ENCODE measurements at regions of chr17 and their contacts with region 1.

Region 1: GRCh38 chr17:56754523-56755208 is 79.1 kb downstream of the C17orf67 start:
- DNase-seq: no peak
- H3K4me3 ChIP-seq: no peak overlapping the region
- CTCF ChIP-seq: no peak

Region 2: GRCh38 chr17:55852734-55853133 is 901.9 kb before region 1 on chr17:
- in situ Hi-C with region 1: loop called (anchors 25 kb)
- DNase-seq: no peak
- H3K4me3 ChIP-seq: no peak overlapping the region
- CTCF ChIP-seq: no peak

Region 3: GRCh38 chr17:56540836-56541235 is 213.8 kb before region 1 on chr17:
- in situ Hi-C with region 1: no loop called
- DNase-seq: no peak
- H3K4me3 ChIP-seq: no peak overlapping the region
- CTCF ChIP-seq: no peak

Region 4: GRCh38 chr17:56798908-56799307 is 44.2 kb after region 1 on chr17:
- in situ Hi-C with region 1: no loop called
- DNase-seq: no peak
- H3K4me3 ChIP-seq: no peak overlapping the region
- CTCF ChIP-seq: no peak